ENCODE measurements at regions of chr12 and their contacts with region 1.

Region 1: GRCh38 chr12:108803428-108804105 is 53.8 kb downstream of the SSH1 start:
- ATAC-seq: peak; percentile 10 to 62 (median 29)
- H3K4me3 ChIP-seq: no peak overlapping the region
- H3K27ac ChIP-seq: no peak overlapping the region
- H3K4me1 ChIP-seq: peaks cover 19 to 24% of the 10 kb centered on the region in 2 donors

Region 2: GRCh38 chr12:108425333-108425732 is 378.2 kb before region 1 on chr12:
- in situ Hi-C with region 1: no loop called
- ATAC-seq: no peak
- H3K4me3 ChIP-seq: no peak overlapping the region
- H3K27ac ChIP-seq: no peak overlapping the region
- H3K4me1 ChIP-seq: no peaks in the 10 kb centered on the region

Region 3: DNA sequence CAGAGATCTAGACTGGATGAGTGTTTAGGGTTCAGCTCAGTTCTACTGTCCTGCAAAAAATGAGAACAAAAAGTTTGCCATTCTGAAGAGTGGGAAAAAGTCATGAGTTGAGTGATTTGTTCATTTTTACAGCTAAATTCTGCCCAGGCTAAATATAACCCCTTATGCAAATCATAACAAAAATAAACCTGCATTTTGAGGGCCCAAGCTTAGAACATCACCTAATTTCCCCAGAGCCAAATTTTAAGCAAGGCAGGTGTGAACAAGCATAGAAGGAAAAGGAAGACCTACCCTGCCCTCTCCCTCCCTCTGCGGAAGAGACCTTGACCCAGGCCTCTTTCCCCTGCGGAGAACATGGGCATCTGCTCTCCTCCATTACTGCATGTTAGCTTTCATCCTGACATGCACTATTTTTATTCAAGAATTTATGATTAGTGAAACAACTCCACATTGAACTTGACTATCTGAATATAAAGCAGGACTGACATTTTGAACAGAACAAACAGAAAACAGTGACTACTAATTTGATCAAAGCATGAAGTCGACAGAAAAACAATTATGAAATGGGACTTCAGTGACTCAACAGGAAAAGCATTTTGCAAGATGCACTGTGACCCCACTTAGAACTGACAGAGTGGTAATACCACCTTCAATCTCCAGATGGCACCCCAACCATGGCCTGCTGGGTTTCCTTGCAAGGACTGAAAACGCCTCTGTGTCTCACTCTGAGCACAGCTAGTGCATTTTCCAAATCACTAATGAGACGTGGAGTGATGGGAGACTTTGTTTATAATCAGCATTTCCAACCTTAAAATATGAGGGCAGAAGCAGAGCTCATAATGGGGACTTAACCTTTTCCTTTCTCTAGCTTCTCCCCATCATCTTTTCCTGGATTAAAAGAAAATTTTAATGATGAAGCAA is 139.0 kb before region 1 on chr12:
- in situ Hi-C with region 1: loop called (anchors 10 to 25 kb)
- ATAC-seq: peak; percentile 93 to 99 (median 96)
- H3K4me3 ChIP-seq: no peak overlapping the region
- H3K27ac ChIP-seq: no peak overlapping the region
- H3K4me1 ChIP-seq: peaks cover 0 to 6% of the 10 kb centered on the region in 2 donors

Measured in motor neuron (in vitro differentiated cells).